Ascending aorta (tissue), 2 donors: ENCODE measurements at regions of chr5 and their contacts with region 1.

Region 1: GRCh38 chr5:134527146-134527960 is 1.9 kb downstream of the JADE2 start:
- DNase-seq: peak; percentile 39 to 92
- H3K4me3 ChIP-seq: peak overlapping the region; percentile 80 to 98
- H3K27ac ChIP-seq: peak overlapping the region; percentile 92 to 96
- H3K4me1 ChIP-seq: peaks cover 18 to 50% of the 10 kb centered on the region in 2 donors
- H3K27me3 ChIP-seq: no peaks in the 10 kb centered on the region
- CTCF ChIP-seq: peak; percentile 96 to 99 (median 99)

Region 2: DNA sequence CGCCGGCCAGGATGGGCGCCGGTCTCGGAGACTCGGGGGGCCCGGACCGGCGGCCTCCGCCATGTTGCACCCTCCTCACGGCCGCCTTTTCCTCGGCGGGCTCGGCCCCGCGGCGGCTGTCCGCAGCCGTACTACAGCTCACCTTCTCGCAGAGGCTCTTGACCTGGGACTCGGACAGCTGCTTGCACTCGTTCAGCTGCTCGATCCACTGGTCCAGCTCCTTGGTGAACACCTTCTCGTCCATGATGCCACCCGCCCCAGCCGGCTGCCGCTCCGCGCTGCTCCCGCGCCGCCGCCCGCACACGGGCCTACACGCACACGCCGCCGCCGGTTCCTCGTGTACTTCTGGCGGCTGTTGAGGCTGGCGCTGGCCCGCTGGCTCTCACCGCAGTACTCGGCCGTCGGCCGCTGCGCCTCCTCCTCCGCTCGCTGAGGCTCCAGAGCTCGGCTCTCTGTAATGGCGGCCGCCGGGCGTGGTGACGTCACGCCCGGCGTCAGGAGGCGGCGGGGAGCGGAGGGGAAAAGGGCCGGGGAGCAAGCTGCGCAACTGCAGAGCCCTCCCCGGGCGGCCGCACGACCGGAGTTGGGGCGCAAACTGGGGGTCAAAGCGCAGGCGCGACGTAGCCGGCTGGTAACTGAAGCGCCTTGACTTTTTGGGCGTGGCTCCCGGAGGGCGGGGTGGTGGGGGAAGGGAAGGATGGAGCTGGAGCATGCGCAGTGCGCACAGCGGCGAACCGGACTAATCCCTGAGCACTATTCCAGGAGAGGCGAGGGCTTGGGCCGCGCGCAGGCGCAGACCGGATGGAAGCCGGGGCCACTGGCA is 301.5 kb before region 1 on chr5 and contains the start of gene PPP2CA:
- intact Hi-C with region 1: loop called (anchors 2 kb)
- DNase-seq: peak; percentile 96 to 99
- H3K4me3 ChIP-seq: peak within 1 kb of the TSS; percentile 76 to 91
- H3K27ac ChIP-seq: peak within 1 kb of the TSS; percentile 100
- H3K4me1 ChIP-seq: peaks cover 7 to 38% of the 10 kb centered on the region in 2 donors
- H3K27me3 ChIP-seq: no peaks in the 10 kb centered on the region
- CTCF ChIP-seq: no peak
- total RNA-seq, gene PPP2CA: 26.2 TPM

Region 3: GRCh38 chr5:134411546-134412266 is 115.6 kb before region 1 on chr5 and contains the start of gene CDKN2AIPNL:
- intact Hi-C with region 1: loop called (anchors 1 kb)
- DNase-seq: peak; percentile 49 to 94
- H3K4me3 ChIP-seq: peak within 1 kb of the TSS; percentile 65 to 81
- H3K27ac ChIP-seq: peak within 1 kb of the TSS; percentile 66 to 72
- H3K4me1 ChIP-seq: peaks cover 2 to 22% of the 10 kb centered on the region in 2 donors
- H3K27me3 ChIP-seq: no peaks in the 10 kb centered on the region
- CTCF ChIP-seq: peak; percentile 83 to 89 (median 86)
- total RNA-seq, gene CDKN2AIPNL: 6.0 TPM

Region 4: DNA sequence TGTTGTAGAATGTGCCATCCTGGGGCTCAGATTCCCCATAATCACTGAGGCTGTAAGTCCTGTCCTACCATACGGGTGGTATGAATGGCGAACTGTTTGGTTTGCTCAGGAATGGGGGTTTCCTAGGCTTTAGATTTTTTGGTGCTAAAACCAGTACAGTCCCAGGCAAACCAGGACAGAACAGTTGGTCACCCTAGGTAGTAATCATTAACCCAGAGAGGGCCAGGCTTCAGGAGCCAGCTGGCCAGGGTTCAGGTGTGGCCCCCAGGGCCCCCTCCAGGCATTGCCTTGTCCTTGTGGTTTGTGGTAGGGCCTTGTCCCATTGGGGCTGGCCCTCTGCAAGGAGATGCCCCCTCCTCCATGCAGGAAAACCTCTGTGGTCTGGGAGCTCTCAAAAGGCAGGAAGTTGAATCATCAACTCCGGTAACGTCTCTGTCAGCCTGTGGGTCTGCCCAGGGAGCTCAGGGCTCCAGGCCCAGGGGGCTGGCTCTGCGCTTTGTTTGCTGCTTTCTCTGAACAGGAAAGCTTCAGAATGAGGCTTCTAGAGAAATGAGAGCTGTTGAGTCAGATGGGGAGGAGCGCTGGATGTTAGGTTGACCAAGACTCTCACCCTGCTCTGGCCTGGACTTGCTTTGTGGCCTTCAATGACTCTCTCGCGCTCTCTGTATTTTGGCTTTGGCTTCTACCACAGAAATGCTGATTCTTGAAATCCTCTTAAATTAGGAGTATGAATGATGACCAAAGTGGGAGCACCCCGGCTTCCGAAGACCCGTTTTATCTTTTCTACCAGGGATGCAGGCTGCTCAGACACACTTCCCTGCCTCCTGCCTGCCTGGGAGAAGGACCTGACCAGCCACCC is 24.0 kb before region 1 on chr5:
- intact Hi-C with region 1: loop called (anchors 2 kb)
- DNase-seq: peak; percentile 53 to 94
- H3K4me3 ChIP-seq: no peak overlapping the region
- H3K27ac ChIP-seq: peak overlapping the region; percentile 67 to 83
- H3K4me1 ChIP-seq: peaks cover 3 to 12% of the 10 kb centered on the region in 2 donors
- H3K27me3 ChIP-seq: no peaks in the 10 kb centered on the region
- CTCF ChIP-seq: no peak

Region 5: DNA sequence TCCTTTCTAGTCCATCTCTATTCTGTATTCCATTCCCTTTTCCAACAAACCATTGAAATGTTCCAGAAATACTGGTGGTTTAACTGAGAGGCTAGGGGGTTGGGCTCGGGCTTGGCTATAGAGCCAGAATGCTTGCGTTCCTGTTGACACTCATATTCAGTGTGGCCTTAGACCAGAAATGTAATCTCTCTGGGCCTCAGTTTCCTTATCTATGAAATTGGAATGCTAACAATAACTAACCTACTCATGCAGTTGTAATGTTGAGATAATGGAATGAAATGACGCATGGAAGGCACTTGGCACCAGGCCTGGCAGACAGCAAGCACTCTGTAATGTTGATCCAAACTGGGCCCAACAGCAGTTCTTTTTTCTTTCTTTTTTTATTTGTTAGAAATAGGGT is 24.9 kb after region 1 on chr5:
- intact Hi-C with region 1: loop called (anchors 1 kb)
- DNase-seq: peak in 1 of 2 donors; percentile 95
- H3K4me3 ChIP-seq: peak overlapping the region in 1 of 2 donors; percentile 6
- H3K27ac ChIP-seq: peak overlapping the region; percentile 88 to 93
- H3K4me1 ChIP-seq: peaks cover 22 to 82% of the 10 kb centered on the region in 2 donors
- H3K27me3 ChIP-seq: no peaks in the 10 kb centered on the region
- CTCF ChIP-seq: no peak

Region 6: GRCh38 chr5:134648425-134649162 is 121.2 kb after region 1 on chr5 and contains the start of gene SEC24A:
- intact Hi-C with region 1: loop called (anchors 2 kb)
- DNase-seq: peak; percentile 75 to 96
- H3K4me3 ChIP-seq: peak within 1 kb of the TSS; percentile 79 to 86
- H3K27ac ChIP-seq: peak within 1 kb of the TSS; percentile 97 to 98
- H3K4me1 ChIP-seq: peaks cover 4 to 15% of the 10 kb centered on the region in 2 donors
- H3K27me3 ChIP-seq: no peaks in the 10 kb centered on the region
- CTCF ChIP-seq: no peak
- total RNA-seq, gene SEC24A: 21.2 TPM